ENCODE measurements at regions of chr5 and their contacts with region 1.

Region 1: DNA sequence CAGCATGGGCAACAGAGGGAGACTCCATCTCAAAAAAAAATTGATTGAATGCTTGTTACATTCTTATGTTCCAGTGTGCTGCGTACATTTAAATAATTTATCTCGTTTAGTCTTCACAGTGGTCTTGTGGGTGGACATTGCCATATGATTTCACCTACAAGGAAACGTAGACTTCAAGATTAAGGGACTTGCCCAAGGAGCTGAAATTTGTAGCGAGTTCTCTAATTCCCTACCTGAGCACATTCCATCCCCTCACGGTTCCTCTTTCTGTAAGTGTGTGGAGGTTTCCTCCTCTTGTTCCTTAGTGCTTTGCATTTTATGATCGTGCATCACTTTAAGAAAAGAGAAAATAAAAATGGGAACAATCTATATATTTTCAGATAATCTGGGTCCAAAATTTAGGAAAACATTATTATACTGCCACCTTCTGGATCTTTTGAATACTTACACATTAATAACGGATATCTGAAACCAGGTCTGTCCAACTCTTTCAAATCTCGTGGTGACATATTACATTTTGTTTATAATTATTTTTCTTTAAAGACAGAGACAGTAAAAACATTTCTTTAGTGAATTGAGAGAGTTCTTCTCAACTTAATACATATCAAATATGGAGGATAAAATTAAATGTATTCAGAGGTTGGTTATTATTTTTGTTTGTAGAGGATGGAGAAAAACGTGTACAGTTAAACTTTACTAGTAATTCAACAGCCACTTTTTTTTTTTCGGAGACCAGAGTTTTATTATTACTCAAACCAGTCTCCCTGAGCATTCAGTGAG is 29.9 kb upstream of the C7 start:
- DNase-seq: peak; percentile 27 to 52 (median 44)
- ATAC-seq: peak; percentile 83
- H3K4me3 ChIP-seq: no peak overlapping the region
- H3K27ac ChIP-seq: no peak overlapping the region
- H3K4me1 ChIP-seq: no peaks in the 10 kb centered on the region
- H3K27me3 ChIP-seq: no peaks in the 10 kb centered on the region
- CTCF ChIP-seq: peak in 2 of 3 experiments; percentile 54 to 82; a peak in 4 of 6 replicates
- EP300 ChIP-seq: no peak
- POLR2A ChIP-seq: no peak
- RAD21 ChIP-seq: peak; percentile 90 to 91

Region 2: GRCh38 chr5:39578887-39579497 is 1300.4 kb before region 1 on chr5:
- CTCF ChIA-PET with region 1: no interaction called
- POLR2A ChIA-PET with region 1: no interaction called
- in situ Hi-C with region 1: loop called (anchors 25 kb)
- intact Hi-C with region 1: loop called (anchors 5 kb)
- DNase-seq: peak in 1 of 4 experiments; percentile 25
- ATAC-seq: no peak
- H3K4me3 ChIP-seq: no peak overlapping the region
- H3K27ac ChIP-seq: no peak overlapping the region
- H3K4me1 ChIP-seq: no peaks in the 10 kb centered on the region
- H3K27me3 ChIP-seq: no peaks in the 10 kb centered on the region
- CTCF ChIP-seq: peak in 2 of 3 experiments; percentile 21 to 73; a peak in 3 of 6 replicates
- EP300 ChIP-seq: no peak
- POLR2A ChIP-seq: no peak
- RAD21 ChIP-seq: peak; percentile 73 to 75

Region 3: DNA sequence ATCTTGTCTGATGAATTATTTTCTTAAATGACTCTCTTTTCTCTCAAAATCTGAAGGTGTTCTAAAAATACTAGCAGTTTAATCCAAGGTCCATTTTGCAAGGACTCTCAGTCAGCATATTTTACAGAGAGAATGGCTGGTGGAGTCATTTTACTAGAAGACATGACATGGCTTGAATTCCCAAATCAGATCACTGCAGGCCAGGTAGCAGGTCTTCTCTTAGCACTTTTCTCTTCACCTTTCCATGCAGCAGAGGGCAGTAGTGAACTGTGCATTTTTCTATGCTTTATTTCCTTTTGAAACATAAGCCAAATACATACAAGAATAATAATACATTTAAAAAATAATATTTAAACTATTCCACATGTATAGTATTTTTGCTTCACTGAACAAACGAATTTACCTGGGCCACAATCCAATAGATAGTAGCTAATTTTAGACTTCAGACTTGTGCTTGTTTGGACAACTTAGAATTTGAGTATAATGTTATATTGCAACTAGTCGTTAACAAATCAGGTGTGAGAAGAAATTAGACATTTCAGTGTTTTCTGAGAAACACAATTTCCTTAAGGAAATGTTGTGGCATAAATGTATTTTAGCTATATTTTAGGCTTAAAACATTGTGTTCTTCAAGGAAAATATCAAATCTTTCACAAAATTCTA is 1165.2 kb before region 1 on chr5:
- CTCF ChIA-PET with region 1: interaction called, 6 read pairs
- POLR2A ChIA-PET with region 1: no interaction called
- in situ Hi-C with region 1: no loop called
- intact Hi-C with region 1: loop called (anchors 10 kb)
- DNase-seq: peak; percentile 24 to 64 (median 34)
- ATAC-seq: peak; percentile 72
- H3K4me3 ChIP-seq: no peak overlapping the region
- H3K27ac ChIP-seq: no peak overlapping the region
- H3K4me1 ChIP-seq: no peaks in the 10 kb centered on the region
- H3K27me3 ChIP-seq: no peaks in the 10 kb centered on the region
- CTCF ChIP-seq: peak; percentile 39 to 75 (median 51); a peak in 5 of 6 replicates
- EP300 ChIP-seq: no peak
- POLR2A ChIP-seq: no peak
- RAD21 ChIP-seq: peak; percentile 76 to 79

Region 4: DNA sequence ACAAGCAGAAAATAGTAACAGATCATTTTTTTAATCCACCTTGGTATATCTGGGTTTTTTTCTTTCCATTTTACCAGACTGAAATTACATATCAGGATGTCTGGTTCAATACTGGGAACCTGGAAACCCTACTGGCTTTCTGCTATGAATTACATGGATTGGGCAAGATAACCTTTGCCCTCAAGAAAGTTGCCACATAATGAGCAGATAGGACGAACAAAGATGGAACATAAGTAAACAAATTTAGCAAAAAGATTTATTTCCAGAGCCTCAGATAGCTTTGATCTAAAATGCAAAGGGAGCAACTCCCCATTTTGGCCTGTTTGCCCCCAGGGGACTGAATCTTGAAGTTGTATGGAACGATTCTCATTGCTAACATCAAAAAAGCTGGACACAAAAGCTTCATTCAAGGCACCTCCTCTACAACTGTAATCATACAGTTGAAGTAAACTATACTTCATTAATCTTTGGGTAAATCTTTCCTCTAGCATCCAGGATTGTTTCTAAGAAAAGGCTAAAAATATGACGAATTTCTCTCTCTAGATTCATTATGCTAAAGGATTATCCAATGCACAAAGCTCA is 331.3 kb before region 1 on chr5:
- CTCF ChIA-PET with region 1: no interaction called
- POLR2A ChIA-PET with region 1: no interaction called
- in situ Hi-C with region 1: no loop called
- intact Hi-C with region 1: no loop called
- DNase-seq: no peak
- ATAC-seq: no peak
- H3K4me3 ChIP-seq: no peak overlapping the region
- H3K27ac ChIP-seq: no peak overlapping the region
- H3K4me1 ChIP-seq: no peaks in the 10 kb centered on the region
- H3K27me3 ChIP-seq: no peaks in the 10 kb centered on the region
- CTCF ChIP-seq: no peak
- EP300 ChIP-seq: no peak
- POLR2A ChIP-seq: no peak
- RAD21 ChIP-seq: no peak

Region 5: DNA sequence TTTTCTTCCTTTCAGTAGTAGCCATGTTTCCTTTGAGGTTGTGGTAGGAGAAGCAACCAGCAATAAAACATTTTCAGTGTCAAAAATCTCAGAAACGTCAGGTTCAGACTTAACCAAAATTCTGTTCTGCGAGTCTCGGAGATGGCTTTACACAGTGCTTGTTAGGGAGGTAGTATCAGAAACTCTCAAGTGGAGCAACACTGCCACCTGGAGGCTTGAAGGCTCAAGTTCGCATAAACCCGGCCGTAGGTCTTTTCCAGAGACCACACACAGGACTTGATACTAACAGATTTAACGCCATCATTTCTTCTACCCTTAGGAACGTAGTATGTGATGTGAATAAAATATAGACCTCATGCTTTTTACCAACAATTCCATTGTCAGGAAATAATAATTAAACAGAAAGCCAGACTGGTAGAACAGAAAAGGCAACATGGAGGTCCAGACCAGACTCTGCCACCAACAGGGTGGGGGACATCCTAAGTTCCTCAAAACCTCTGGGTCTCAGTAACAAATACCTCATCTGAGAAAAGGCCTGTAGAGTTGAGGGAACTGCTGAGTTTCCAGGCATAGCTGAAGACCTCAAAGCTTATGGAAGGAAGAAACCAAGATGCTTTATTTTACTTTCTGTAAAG is 191.1 kb before region 1 on chr5:
- CTCF ChIA-PET with region 1: no interaction called
- POLR2A ChIA-PET with region 1: no interaction called
- in situ Hi-C with region 1: no loop called
- intact Hi-C with region 1: loop called (anchors 2 kb)
- DNase-seq: peak; percentile 78 to 91 (median 81)
- ATAC-seq: peak; percentile 99
- H3K4me3 ChIP-seq: no peak overlapping the region
- H3K27ac ChIP-seq: no peak overlapping the region
- H3K4me1 ChIP-seq: no peaks in the 10 kb centered on the region
- H3K27me3 ChIP-seq: no peaks in the 10 kb centered on the region
- CTCF ChIP-seq: peak; percentile 86 to 96 (median 87)
- EP300 ChIP-seq: no peak
- POLR2A ChIP-seq: no peak
- RAD21 ChIP-seq: peak; percentile 94 to 97

Region 6: DNA sequence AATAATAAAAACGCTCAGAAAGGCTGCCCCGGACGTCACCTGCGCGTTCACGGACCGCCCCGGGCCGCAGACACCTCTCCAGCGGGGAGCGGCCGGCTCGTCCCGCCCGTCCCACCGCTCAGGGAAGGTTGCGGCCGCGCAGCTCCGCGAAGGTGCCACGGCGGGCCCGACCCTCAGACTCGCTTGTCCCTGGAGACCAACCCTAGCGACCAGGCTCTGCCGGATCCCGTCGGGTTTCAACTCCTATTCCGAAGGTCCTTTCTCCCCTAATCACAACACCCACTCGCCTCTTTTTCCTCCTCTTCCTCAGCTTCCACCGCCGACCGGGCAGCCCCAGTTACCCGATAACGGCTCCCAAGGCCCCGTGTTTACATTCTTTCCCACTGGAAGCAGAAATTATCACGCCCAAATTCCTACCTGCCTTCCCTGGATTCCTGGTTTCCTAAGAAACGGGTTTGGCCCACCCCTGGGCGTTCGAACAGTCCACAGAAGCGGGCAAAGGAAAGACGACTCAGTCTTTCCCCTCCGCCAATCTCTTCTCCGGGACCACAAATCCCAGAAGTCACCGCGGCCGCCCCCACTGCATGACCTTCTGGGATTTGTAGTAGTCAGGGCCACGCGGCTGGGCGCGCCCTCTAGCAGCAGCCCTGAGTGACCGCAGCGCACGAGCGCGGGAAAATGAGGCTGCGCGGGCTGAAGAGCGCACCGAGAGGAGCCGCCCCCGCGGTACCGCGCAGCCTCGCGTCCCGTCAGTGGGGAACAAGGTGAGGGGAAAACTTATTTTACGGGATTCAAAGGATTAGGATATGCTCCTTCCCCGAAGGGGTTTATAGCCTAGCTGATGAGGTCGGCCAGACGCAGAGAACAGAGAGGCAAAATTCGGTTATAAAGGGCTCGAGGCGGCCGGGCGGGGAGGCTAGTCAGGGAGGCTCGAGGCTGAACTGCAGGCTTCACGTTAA is 123.7 kb before region 1 on chr5 and contains the start of gene TTC33:
- CTCF ChIA-PET with region 1: interaction called, 25 read pairs
- POLR2A ChIA-PET with region 1: no interaction called
- in situ Hi-C with region 1: loop called (anchors 5 kb)
- intact Hi-C with region 1: loop called (anchors 1 kb)
- DNase-seq: peak; percentile 92 to 99 (median 96)
- ATAC-seq: peak; percentile 94
- H3K4me3 ChIP-seq: peak within 1 kb of the TSS; percentile 68
- H3K27ac ChIP-seq: peak within 1 kb of the TSS; percentile 69
- H3K4me1 ChIP-seq: peaks cover 9 to 12% of the 10 kb centered on the region in 2 experiments; a peak in 3 of 5 replicates
- H3K27me3 ChIP-seq: no peaks in the 10 kb centered on the region
- CTCF ChIP-seq: peak; percentile 91 to 95 (median 92)
- EP300 ChIP-seq: peak; percentile 30; the same call in 1 of the 2 replicates
- POLR2A ChIP-seq: peak; percentile 72
- RAD21 ChIP-seq: peak; percentile 45 to 55
- polyA plus RNA-seq, gene TTC33: 21.1 to 24.9 TPM

Region 7: GRCh38 chr5:40834849-40835787 is 44.2 kb before region 1 on chr5 and contains the start of gene RPL37:
- CTCF ChIA-PET with region 1: no interaction called
- POLR2A ChIA-PET with region 1: no interaction called
- in situ Hi-C with region 1: no loop called
- intact Hi-C with region 1: loop called (anchors 5 kb)
- DNase-seq: peak; percentile 92 to 99 (median 94)
- ATAC-seq: peak; percentile 92
- H3K4me3 ChIP-seq: peak within 1 kb of the TSS; percentile 78
- H3K27ac ChIP-seq: peak within 1 kb of the TSS; percentile 96
- H3K4me1 ChIP-seq: peaks cover 5 to 28% of the 10 kb centered on the region in 2 experiments; a peak in 4 of 5 replicates
- H3K27me3 ChIP-seq: no peaks in the 10 kb centered on the region
- CTCF ChIP-seq: no peak
- EP300 ChIP-seq: peak; percentile 70
- POLR2A ChIP-seq: peak; percentile 100
- RAD21 ChIP-seq: peak; percentile 13 to 34; a peak in 3 of 4 replicates
- polyA plus RNA-seq, gene RPL37: 2,628 to 3,207 TPM